Right ventricle myocardium superior (tissue), 1 donor: ENCODE measurements at regions of chr3 and their contacts with region 1.

Region 1: GRCh38 chr3:59235634-59236012 is 185.8 kb upstream of the CFAP20DC start:
- DNase-seq: no peak
- ATAC-seq: no peak

Region 2: DNA sequence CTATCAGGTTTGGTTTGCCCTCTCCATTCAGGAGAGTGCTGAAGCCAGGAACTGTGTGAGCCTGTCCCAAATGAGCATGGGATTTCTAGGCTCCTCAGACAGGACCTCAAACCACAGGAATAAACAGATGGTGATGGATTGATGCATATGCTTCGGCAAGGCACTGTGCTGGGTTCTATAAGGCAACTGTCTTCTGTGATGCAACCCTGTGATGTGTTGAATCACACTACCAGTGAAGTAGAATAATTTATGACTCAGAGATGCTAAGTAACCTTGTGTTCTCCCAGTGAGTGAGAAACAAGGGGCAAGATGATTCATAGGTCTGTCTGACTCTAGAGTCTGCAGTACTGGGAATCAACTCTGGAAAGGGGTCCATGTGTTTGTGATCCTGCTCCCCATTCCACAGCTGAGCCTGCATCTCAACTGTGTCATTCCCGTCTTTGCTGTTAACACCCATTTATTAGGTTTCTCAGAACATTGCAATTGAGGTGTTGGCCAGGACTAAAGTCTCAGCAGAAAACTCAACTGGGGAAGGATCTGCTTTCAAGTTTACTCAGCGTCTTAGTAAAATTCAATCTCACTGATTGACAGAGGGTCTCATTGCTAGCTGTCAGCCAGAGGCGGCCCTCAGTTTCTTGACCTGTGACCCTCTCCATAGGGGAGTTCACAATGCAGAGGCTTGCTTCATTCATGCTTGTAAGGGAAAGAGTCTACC is 324.3 kb after region 1 on chr3:
- intact Hi-C with region 1: loop called (anchors 10 kb)
- DNase-seq: no peak
- ATAC-seq: no peak